Naive thymus-derived CD4-positive, alpha-beta T cell (primary cell): ENCODE measurements at regions of chr1 and their contacts with region 1.

Region 1: GRCh38 chr1:167270349-167271092 is 49.8 kb downstream of the POU2F1 start:
- DNase-seq: no peak
- ATAC-seq: no peak
- H3K4me3 ChIP-seq: no peak overlapping the region
- H3K4me3 Mint-ChIP-seq: no peak overlapping the region
- H3K27ac ChIP-seq: no peak overlapping the region
- H3K27ac Mint-ChIP-seq: no peak overlapping the region
- H3K4me1 ChIP-seq: peaks cover 0 to 2% of the 10 kb centered on the region in 2 donors
- H3K4me1 Mint-ChIP-seq: peaks cover 20 to 71% (median 61%) of the 10 kb centered on the region in 7 donors
- H3K27me3 ChIP-seq: no peaks in the 10 kb centered on the region
- H3K27me3 Mint-ChIP-seq: no peaks in the 10 kb centered on the region

Region 2: DNA sequence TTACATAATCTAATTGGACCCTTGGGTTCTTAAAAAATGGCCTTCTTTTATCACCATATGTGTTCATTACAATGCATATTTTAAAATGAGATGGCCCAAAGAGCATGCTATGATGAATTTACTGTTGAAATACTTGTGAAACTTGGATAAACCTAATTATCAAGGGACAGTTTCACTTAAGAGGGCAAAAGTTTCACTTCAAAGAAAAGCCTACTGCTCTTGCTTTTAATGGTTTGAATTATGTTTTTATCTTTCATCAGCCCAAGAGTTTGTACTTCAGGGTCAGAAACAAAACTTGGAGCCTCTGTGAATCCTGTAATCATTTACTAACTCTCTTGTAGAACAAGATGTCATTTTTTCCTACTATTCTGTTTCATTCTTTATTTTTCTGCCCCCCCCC is 17.5 kb before region 1 on chr1:
- CTCF ChIA-PET with region 1: interaction called, 10 read pairs
- POLR2A ChIA-PET with region 1: interaction called, 3 read pairs
- intact Hi-C with region 1: no loop called
- DNase-seq: no peak
- ATAC-seq: no peak
- H3K4me3 ChIP-seq: no peak overlapping the region
- H3K4me3 Mint-ChIP-seq: no peak overlapping the region
- H3K27ac ChIP-seq: no peak overlapping the region
- H3K27ac Mint-ChIP-seq: no peak overlapping the region
- H3K4me1 ChIP-seq: no peaks in the 10 kb centered on the region
- H3K4me1 Mint-ChIP-seq: peaks cover 13 to 50% (median 43%) of the 10 kb centered on the region in 7 donors
- H3K27me3 ChIP-seq: no peaks in the 10 kb centered on the region
- H3K27me3 Mint-ChIP-seq: no peaks in the 10 kb centered on the region

Region 3: DNA sequence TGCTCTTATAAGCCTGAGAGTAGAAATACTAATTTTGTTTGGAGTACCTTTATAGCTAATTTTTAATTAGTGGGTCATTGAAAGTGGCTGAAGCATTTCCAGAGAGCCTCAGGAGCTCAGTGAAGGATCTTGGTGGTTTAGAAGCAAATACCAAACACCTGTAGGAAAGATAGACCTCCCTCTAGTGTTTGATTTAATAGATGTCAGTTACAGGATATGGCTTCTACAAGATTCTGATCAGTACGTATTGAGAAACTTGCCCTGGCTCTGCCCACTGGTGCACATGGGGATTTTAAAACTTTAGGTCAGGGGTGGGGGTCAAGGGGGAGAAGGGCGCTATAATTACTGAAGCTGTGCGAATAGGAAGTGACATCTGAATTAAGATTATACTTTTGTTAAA is 72.3 kb after region 1 on chr1:
- CTCF ChIA-PET with region 1: interaction called, 3 read pairs
- POLR2A ChIA-PET with region 1: no interaction called
- intact Hi-C with region 1: loop called (anchors 1 to 2 kb)
- DNase-seq: peak in 4 of 9 donors; percentile 9 to 27 (median 16)
- ATAC-seq: peak; percentile 52
- H3K4me3 ChIP-seq: no peak overlapping the region
- H3K4me3 Mint-ChIP-seq: no peak overlapping the region
- H3K27ac ChIP-seq: no peak overlapping the region
- H3K27ac Mint-ChIP-seq: peak overlapping the region in 1 of 9 donors; percentile 5
- H3K4me1 ChIP-seq: no peaks in the 10 kb centered on the region
- H3K4me1 Mint-ChIP-seq: peaks cover 4 to 14% (median 9%) of the 10 kb centered on the region in 7 donors
- H3K27me3 ChIP-seq: no peaks in the 10 kb centered on the region
- H3K27me3 Mint-ChIP-seq: no peaks in the 10 kb centered on the region

Region 4: DNA sequence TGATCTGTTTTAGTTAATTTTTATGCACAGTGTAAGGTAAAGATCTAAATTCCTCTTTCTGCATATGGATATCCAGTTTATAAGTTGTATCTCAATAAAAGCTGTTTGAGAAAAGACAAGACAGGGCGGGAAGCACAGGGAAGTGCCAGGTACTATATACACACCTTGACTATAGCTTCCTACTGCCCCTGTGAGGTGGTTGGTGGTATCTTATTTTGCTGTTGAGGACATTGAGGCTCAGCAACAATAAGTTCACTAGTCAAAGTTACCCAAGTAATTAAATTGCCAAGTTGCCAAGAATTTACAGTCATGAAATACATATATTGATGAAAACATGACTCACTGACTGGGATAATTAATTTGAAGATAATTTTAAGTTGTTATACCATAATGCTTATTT is 138.7 kb after region 1 on chr1:
- CTCF ChIA-PET with region 1: no interaction called
- POLR2A ChIA-PET with region 1: no interaction called
- intact Hi-C with region 1: loop called in 1 of 2 experiments (anchors 1 kb)
- DNase-seq: peak in 2 of 9 donors; percentile 19 to 25
- ATAC-seq: peak; percentile 45
- H3K4me3 ChIP-seq: no peak overlapping the region
- H3K4me3 Mint-ChIP-seq: no peak overlapping the region
- H3K27ac ChIP-seq: no peak overlapping the region
- H3K27ac Mint-ChIP-seq: peak overlapping the region in 1 of 9 donors; percentile 39
- H3K4me1 ChIP-seq: no peaks in the 10 kb centered on the region
- H3K4me1 Mint-ChIP-seq: peaks cover 0 to 18% (median 6%) of the 10 kb centered on the region in 7 donors
- H3K27me3 ChIP-seq: no peaks in the 10 kb centered on the region
- H3K27me3 Mint-ChIP-seq: no peaks in the 10 kb centered on the region

Region 5: GRCh38 chr1:167533851-167534300 is 263.4 kb after region 1 on chr1:
- CTCF ChIA-PET with region 1: interaction called, 48 read pairs
- POLR2A ChIA-PET with region 1: interaction called, 7 read pairs
- intact Hi-C with region 1: loop called (anchors 1 kb)
- DNase-seq: peak in 8 of 9 donors; percentile 50 to 72 (median 58)
- ATAC-seq: peak; percentile 87
- H3K4me3 ChIP-seq: no peak overlapping the region
- H3K4me3 Mint-ChIP-seq: no peak overlapping the region
- H3K27ac ChIP-seq: no peak overlapping the region
- H3K27ac Mint-ChIP-seq: peak overlapping the region in 1 of 9 donors; percentile 30
- H3K4me1 ChIP-seq: no peaks in the 10 kb centered on the region
- H3K4me1 Mint-ChIP-seq: peaks cover 0 to 11% (median 2%) of the 10 kb centered on the region in 7 donors
- H3K27me3 ChIP-seq: no peaks in the 10 kb centered on the region
- H3K27me3 Mint-ChIP-seq: peaks cover 0 to 3% (median 0%) of the 10 kb centered on the region in 5 donors

Region 6: DNA sequence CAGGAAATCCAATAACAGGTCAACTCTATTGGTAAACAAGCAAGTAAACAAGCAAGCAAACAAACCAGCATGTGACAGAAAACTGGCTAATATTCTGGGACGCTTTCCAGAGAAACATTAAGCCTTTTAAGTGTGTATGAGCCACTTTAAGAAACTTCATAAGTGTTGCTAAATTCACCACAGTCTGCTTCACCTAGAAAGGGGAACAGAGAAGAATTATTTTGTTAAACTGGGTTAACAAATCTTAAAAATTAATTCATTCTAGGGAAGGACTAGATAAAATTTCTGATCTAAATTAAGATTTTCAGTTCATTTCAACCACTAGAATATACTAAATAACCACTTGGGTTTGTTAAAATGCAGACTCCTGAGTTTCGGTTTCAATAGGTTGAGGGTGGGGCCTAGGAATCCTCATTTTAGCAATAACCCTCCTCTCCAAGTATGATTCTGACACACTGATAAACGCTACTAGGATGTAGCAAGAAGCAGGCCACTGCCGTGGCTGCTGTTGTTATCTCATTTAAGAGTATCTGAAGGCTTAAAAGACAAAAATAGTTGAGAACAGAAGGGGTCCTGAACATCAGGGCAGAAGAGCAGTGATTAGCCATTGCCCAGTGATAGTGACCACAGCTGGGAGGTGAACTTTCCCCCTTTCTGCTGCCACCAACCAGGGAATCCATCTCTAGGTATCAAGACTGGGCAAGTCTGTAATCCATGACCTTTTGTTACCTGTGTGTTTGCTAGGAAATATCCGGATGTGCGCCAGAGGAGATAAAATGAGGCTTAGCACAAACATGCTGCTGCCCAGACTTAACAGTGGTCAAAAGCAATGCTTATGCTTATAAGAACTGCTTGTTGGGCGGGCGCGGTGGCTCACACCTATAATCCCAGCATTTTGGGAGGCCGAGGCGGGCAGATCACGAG is 271.9 kb after region 1 on chr1:
- CTCF ChIA-PET with region 1: interaction called, 11 read pairs
- POLR2A ChIA-PET with region 1: interaction called, 8 read pairs
- intact Hi-C with region 1: loop called (anchors 1 to 2 kb)
- DNase-seq: no peak
- ATAC-seq: no peak
- H3K4me3 ChIP-seq: no peak overlapping the region
- H3K4me3 Mint-ChIP-seq: peak overlapping the region in 1 of 10 donors; percentile 15
- H3K27ac ChIP-seq: no peak overlapping the region
- H3K27ac Mint-ChIP-seq: peak overlapping the region in 2 of 9 donors; percentile 33 to 68
- H3K4me1 ChIP-seq: no peaks in the 10 kb centered on the region
- H3K4me1 Mint-ChIP-seq: peaks cover 3 to 56% (median 5%) of the 10 kb centered on the region in 7 donors
- H3K27me3 ChIP-seq: no peaks in the 10 kb centered on the region
- H3K27me3 Mint-ChIP-seq: no peaks in the 10 kb centered on the region

Region 7: GRCh38 chr1:167553136-167554027 is 282.9 kb after region 1 on chr1 and contains the start of gene CREG1:
- CTCF ChIA-PET with region 1: interaction called, 12 read pairs
- POLR2A ChIA-PET with region 1: no interaction called
- intact Hi-C with region 1: loop called (anchors 1 kb)
- DNase-seq: peak; percentile 82 to 92 (median 88)
- ATAC-seq: peak; percentile 98
- H3K4me3 ChIP-seq: peak within 1 kb of the TSS; percentile 71
- H3K4me3 Mint-ChIP-seq: peak within 1 kb of the TSS; percentile 85 to 97 (median 92)
- H3K27ac ChIP-seq: peak within 1 kb of the TSS; percentile 72
- H3K27ac Mint-ChIP-seq: peak within 1 kb of the TSS; percentile 43 to 88 (median 80)
- H3K4me1 ChIP-seq: peaks cover 19% of the 10 kb centered on the region in 2 donors
- H3K4me1 Mint-ChIP-seq: peaks cover 35 to 58% (median 46%) of the 10 kb centered on the region in 7 donors
- H3K27me3 ChIP-seq: no peaks in the 10 kb centered on the region
- H3K27me3 Mint-ChIP-seq: peaks cover 0 to 4% (median 0%) of the 10 kb centered on the region in 5 donors
- total RNA-seq, gene CREG1: 10.6 to 33.4 (median 23.1) TPM